ENCODE measurements at regions of chr15 and their contacts with region 1.

Region 1: GRCh38 chr15:80173022-80173759 is 20.4 kb downstream of the FAH start:
- DNase-seq: peak; percentile 47 to 91
- H3K4me3 ChIP-seq: no peak overlapping the region
- H3K27ac ChIP-seq: no peak overlapping the region
- H3K4me1 ChIP-seq: no peaks in the 10 kb centered on the region
- H3K27me3 ChIP-seq: no peaks in the 10 kb centered on the region
- CTCF ChIP-seq: peak; percentile 86 to 93 (median 86)
- EP300 ChIP-seq: no peak
- POLR2A ChIP-seq: no peak
- RAD21 ChIP-seq: peak; percentile 94 to 96

Region 2: DNA sequence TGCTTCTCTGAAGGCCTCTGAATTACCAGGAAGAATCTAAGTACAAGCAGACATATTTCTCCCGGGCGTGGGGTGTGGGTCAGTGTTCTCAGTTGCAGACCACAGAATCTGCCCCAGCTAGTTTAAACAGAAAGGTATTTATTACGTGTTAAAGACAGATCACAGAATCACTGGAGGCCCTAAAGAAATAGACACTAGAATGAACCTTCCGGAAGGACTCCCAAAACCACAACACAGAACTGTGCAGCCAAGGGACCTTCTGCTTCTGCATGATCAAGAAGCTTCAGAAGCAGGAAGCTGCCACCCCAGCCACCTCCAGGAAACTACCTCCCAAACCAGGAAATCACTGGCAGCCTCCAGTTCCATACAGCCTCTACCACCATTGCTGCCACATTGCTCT is 146.4 kb before region 1 on chr15:
- CTCF ChIA-PET with region 1: interaction called, 14 read pairs
- POLR2A ChIA-PET with region 1: no interaction called
- DNase-seq: no peak
- H3K4me3 ChIP-seq: no peak overlapping the region
- H3K27ac ChIP-seq: no peak overlapping the region
- H3K4me1 ChIP-seq: peaks cover 0 to 10% (median 4%) of the 10 kb centered on the region in 4 experiments; a peak in 6 of 7 replicates
- H3K27me3 ChIP-seq: no peaks in the 10 kb centered on the region
- CTCF ChIP-seq: no peak
- EP300 ChIP-seq: no peak
- POLR2A ChIP-seq: no peak
- RAD21 ChIP-seq: no peak

Region 3: DNA sequence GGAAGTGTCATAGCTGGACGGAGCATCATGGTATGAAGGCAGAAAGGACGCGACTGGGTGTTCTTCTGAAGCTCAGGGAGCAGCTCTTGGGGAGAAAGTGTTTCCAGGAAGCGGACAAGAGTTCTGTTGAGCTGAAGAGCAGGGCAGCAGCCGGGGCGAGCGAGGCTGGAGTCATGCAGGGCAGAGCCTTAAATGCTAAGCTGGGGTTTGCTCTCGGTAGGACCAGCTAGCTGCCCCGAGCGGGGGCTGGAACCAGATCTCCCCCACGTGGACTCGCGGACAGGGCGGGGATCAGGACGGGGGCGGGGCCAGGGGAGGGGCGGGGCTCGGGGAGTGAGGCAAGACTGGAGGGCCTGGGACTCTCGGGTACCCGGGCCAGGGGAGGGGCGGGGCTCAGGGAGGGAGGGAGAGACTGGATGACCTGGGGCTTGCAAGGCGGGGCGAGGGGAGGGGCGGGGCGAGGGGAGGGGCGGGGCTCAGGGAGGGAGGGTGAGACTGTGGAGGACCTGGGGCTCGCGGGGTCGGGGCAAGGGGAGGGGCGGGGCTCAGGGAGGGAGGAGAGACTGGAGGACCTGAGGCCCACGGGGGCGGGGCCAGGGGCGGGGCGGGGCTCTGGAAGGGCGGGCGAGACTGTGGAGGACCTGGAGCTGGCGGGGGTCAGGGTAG is 20.9 kb before region 1 on chr15:
- CTCF ChIA-PET with region 1: interaction called, 17 read pairs
- POLR2A ChIA-PET with region 1: interaction called, 7 read pairs
- DNase-seq: peak; percentile 84 to 85
- H3K4me3 ChIP-seq: peak overlapping the region; percentile 61 to 83 (median 66)
- H3K27ac ChIP-seq: 0 out of 2 replicates have a peak overlapping the region, but pooled peaks have one; percentile 19
- H3K4me1 ChIP-seq: peaks cover 0 to 12% (median 2%) of the 10 kb centered on the region in 4 experiments; a peak in 3 of 7 replicates
- H3K27me3 ChIP-seq: peaks cover 0 to 2% (median 0%) of the 10 kb centered on the region in 4 experiments; a peak in 2 of 7 replicates
- CTCF ChIP-seq: no peak
- EP300 ChIP-seq: no peak
- POLR2A ChIP-seq: no peak; a peak in 1 of 3 replicates
- RAD21 ChIP-seq: no peak

Measured in H1 (cell line).